GM10248 (cell line): ENCODE measurements at regions of chr17 and their contacts with region 1.

Region 1: DNA sequence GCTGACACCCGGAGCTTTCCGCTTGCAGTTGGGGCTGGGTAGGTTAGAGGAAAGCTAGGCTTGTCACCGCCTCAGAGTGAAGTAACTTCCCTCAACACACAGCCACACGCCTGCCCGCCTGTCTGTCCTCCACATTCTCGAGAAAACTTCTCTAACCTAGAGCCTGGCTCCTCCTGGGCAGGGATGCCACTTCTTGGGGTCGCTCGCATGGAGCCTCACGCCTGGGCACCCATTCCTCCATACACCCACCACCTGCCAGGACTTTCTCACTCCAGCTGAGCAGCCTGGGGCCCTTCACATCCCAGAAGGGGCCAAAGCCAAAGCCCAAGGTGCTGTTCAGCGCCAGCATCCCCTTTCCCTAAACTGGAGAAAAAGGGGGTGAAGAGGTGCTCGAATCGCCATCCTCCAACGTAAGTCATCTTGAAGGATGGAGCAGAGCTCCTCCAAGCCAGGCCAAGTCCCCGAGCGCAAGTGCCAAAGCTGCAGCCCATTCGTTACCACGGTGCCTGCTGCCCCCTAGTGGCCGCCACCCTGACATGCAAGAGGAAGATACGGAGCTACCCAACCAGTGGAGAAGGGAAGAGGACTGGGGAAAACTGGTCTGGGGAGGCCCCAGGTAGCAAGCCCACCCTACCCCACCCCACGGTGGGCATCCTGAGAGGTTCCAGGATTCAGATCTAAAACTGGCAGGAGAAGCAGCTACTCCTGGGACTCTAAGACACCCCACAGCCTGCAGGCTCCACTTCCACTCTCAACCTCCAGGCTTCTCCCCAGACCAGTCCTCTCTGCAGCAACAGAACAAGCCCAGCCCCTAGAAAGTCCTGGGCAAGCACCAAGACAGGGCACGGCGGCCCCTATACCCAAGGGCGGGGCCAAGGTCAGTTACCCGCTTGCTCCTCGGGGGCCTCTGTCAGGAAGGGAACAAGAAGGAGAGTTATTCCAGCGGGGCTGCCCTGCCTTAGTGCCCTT is 63.1 kb downstream of the MYO18A start:
- DNase-seq: peak; percentile 83
- CTCF ChIP-seq: peak; percentile 98

Region 2: DNA sequence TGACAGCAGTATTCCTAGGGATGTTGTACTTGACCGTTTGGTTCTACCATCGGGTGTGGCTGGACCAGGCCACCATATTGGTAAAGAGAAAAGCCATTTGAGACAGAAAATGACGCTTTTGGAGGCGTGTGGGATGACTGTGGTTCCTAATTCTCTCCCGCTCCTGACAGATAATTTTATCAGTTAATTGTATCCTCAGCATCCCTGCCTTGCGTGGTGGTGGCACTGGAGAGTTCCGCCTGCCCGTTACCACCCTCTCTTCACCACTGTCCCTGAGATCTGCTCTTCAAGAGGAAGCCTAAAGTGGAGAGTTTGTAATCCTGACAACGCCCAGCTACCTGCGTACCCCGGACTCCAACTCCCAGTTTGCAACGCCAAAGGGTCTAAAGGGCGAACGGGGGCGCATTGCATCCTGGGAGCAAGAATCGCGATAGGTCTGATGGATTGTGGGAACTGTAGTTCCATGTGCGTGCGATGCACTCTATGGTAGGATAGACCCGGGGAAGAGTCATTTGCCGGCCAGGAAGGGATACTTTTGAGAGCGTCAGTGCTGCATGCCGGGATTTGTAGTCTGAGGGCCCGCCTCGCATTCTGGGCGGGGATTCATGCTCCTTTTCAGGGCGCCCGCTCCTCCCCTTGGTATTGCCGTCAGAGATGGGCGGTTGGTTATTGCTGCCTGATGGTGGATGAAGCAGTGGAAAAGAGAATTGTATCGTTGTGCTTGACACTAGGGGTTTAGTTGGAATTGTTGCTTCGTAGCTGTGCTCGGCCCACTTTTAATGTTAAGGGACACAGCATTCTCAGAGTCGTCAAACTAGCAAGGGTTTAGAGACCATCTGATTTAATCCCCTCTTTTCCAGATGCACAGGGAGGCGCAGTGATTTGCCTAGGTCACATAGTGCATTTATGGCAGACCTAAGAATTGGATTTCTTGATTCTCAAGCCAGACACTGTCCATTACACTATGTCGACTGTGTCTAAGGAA is 164.8 kb before region 1 on chr17:
- CTCF ChIA-PET with region 1: interaction called, 346 read pairs
- POLR2A ChIA-PET with region 1: no interaction called
- DNase-seq: peak; percentile 92
- CTCF ChIP-seq: no peak

Region 3: DNA sequence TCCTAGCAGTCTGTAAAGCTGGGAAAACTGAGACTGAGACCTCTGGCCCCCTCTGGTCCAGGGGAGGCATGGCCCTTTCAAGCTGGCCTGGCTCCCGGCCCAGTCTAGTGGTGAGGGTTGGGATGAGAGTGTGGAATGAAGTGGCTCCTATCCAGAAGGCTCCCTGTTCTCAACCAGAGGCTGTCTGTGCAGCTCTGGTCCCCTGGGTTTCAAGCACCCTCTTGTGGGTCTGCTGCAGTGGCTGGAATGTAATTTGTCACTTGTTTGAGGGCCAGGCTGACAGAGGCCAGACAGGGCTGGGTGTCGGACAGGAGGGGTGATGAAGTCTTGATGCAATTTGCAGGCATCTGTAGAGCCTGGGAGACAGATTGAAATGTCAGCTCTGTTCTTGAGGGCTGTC is 143.7 kb before region 1 on chr17:
- CTCF ChIA-PET with region 1: interaction called, 25 read pairs
- POLR2A ChIA-PET with region 1: no interaction called
- DNase-seq: no peak
- CTCF ChIP-seq: no peak

Region 4: GRCh38 chr17:29102741-29103181 is 14.3 kb before region 1 on chr17:
- CTCF ChIA-PET with region 1: interaction called, 30 read pairs
- POLR2A ChIA-PET with region 1: no interaction called
- DNase-seq: no peak
- CTCF ChIP-seq: no peak

Region 5: GRCh38 chr17:29140051-29140621 is 23.0 kb after region 1 on chr17:
- CTCF ChIA-PET with region 1: interaction called, 25 read pairs
- POLR2A ChIA-PET with region 1: no interaction called
- DNase-seq: peak; percentile 80
- CTCF ChIP-seq: no peak

Region 6: GRCh38 chr17:29212681-29213121 is 95.6 kb after region 1 on chr17:
- CTCF ChIA-PET with region 1: no interaction called
- POLR2A ChIA-PET with region 1: no interaction called
- DNase-seq: no peak
- CTCF ChIP-seq: no peak

Region 7: DNA sequence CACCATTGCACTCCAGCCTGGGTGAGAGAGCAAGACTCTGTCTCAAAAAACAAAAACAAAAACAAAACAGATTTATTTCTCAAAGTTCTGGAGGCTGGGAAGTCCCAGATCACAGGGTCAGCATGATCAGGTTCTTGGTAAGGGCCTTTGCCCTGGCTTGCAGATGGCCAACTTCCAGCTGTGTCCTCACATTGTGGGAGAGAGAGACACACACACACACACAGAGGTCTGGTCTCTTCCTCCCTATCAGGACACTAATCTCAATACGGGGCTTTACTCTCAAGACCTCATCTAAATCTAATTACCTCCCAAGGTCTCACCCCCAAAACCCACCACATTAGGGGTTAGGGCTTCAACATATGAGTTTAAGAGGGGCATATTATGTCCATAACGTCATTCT is 246.6 kb after region 1 on chr17:
- CTCF ChIA-PET with region 1: no interaction called
- POLR2A ChIA-PET with region 1: no interaction called
- DNase-seq: no peak
- CTCF ChIP-seq: no peak